RWPE1 (cell line): ENCODE measurements at regions of chr4 and their contacts with region 1.

Region 1: DNA sequence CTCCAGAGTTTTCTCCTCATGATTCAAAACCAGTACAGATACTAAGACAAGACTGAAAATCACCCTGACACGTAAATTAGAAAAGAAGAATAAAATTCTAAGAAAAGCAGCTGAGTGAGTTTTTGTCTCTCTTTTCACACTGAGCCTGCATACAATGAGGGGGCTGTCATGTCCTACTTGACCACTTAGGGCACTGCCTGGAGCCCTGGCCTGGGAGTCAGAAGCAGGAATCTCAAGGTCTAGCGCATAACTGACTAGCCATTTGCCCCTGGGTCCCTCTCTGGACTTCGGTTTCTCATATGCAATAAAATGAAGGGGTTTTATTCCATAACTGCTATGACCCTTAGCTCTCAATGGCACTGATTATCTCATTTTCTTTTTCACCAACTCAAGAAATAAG is 36.7 kb upstream of the SLC25A4 start:
- DNase-seq: no peak
- H3K27ac ChIP-seq: no peak overlapping the region
- CTCF ChIP-seq: no peak

Region 2: GRCh38 chr4:185096032-185096653 is 10.2 kb before region 1 on chr4:
- CTCF ChIA-PET with region 1: interaction called, 15 read pairs
- POLR2A ChIA-PET with region 1: no interaction called
- DNase-seq: peak; percentile 49
- H3K27ac ChIP-seq: no peak overlapping the region
- CTCF ChIP-seq: peak; percentile 67